ENCODE measurements at regions of chr7 and their contacts with region 1.

Region 1: DNA sequence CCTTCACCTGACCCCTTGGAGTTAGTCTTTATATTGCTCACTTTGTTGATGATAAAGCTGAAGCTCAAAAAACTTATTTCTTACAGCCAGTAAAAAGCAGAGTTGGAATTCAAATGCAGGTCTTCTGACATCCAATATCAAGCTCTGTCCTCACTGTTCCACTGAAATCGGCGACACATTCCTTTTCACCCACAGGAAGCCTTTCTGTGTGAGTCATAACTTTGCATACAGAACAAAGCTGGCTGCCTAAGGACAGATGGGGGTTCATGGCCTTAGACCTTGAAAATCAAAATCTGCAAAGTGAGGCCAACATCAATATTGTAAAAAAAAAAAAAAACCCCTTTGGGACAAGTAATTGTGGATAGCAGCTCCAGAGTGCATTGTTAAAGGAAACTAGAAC is 21.8 kb upstream of the AKR1B1 start:
- DNase-seq: peak; percentile 36
- ATAC-seq: peak; percentile 97
- H3K4me3 ChIP-seq: peak overlapping the region in 1 of 2 experiments; percentile 31; a peak in 2 of 4 replicates
- H3K27ac ChIP-seq: no peak overlapping the region
- H3K4me1 ChIP-seq: peaks cover 13 to 15% of the 10 kb centered on the region in 2 experiments
- H3K27me3 ChIP-seq: no peaks in the 10 kb centered on the region
- CTCF ChIP-seq: no peak
- POLR2A ChIP-seq: no peak
- RAD21 ChIP-seq: no peak

Region 2: GRCh38 chr7:134448700-134449229 is 32.0 kb before region 1 on chr7:
- CTCF ChIA-PET with region 1: interaction called, 13 read pairs
- POLR2A ChIA-PET with region 1: no interaction called
- RAD21 ChIA-PET with region 1: no interaction called
- intact Hi-C with region 1: loop called (anchors 1 kb)
- DNase-seq: peak; percentile 21
- ATAC-seq: peak; percentile 39; the same call in 1 of the 2 replicates
- H3K4me3 ChIP-seq: peak overlapping the region in 1 of 2 experiments; percentile 2; a peak in 1 of 4 replicates
- H3K27ac ChIP-seq: no peak overlapping the region
- H3K4me1 ChIP-seq: peaks cover 5 to 24% of the 10 kb centered on the region in 2 experiments
- H3K27me3 ChIP-seq: no peaks in the 10 kb centered on the region
- CTCF ChIP-seq: no peak
- POLR2A ChIP-seq: no peak
- RAD21 ChIP-seq: no peak